ENCODE measurements at regions of chr22 and their contacts with region 1.

Region 1: DNA sequence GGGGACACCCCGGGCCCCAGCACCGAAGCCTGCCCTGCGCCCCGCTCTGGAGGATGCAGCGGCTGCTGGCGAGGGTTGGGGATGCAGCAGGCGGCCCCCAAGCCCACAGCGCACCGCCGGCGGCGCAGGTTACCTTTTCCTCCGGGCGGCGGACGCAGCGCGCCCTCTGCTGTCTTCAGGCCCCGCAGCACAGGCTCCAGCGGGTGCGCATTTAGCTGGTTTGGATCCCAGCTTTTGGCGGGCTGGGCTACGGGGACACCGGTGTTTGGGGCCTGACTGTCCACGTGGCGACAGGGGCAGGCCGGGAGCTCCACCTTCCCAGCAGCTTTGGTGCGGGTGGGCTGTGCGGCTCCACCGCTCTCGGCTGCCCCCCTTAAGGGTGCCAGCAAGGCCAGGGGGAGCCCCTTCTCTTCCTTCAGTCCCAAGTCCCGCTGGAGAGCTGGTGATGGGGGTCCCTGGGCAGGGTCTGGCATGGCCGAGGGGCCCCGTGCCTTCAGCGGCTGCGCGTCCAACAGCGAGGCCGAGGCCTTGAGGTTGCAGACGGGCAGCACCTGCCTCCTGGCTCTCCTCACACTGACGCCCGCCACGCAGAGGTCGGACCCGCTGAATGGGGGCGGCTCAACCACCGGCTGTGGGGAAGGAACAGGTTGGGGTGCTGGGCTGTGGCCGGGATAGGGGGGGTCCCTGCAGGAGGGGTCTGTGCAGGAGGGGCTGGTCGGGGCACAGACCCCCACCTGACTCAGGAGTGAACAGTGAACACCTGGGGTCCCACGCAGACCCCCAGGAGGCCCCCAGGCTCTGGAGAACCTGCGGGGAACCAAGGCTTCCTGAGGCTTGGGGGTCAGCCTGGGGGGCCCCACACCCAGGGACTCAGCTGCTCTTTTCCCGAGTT is 18.0 kb upstream of the IL17REL start:
- DNase-seq: peak; percentile 87
- ATAC-seq: peak; percentile 96
- H3K4me3 ChIP-seq: peak overlapping the region in 3 of 5 experiments; percentile 20 to 35 (median 23)
- H3K4me3 Mint-ChIP-seq: no peak overlapping the region
- H3K27ac ChIP-seq: no peak overlapping the region
- H3K27ac Mint-ChIP-seq: no peak overlapping the region
- H3K4me1 ChIP-seq: peaks cover 22 to 24% of the 10 kb centered on the region in 2 donors
- H3K4me1 Mint-ChIP-seq: peaks cover 16% of the 10 kb centered on the region
- H3K27me3 ChIP-seq: peaks cover 0 to 13% (median 6%) of the 10 kb centered on the region in 4 experiments
- H3K27me3 Mint-ChIP-seq: peaks cover 7% of the 10 kb centered on the region
- CTCF ChIP-seq: peak; percentile 92

Region 2: GRCh38 chr22:49925525-49926128 is 104.9 kb before region 1 on chr22:
- CTCF ChIA-PET with region 1: interaction called, 127 read pairs
- POLR2A ChIA-PET with region 1: interaction called, 20 read pairs
- intact Hi-C with region 1: no loop called
- DNase-seq: peak; percentile 96
- ATAC-seq: peak; percentile 74
- H3K4me3 ChIP-seq: peak overlapping the region in 4 of 5 experiments; percentile 37 to 53 (median 44)
- H3K4me3 Mint-ChIP-seq: peak overlapping the region; percentile 87
- H3K27ac ChIP-seq: peak overlapping the region; percentile 95 to 98
- H3K27ac Mint-ChIP-seq: peak overlapping the region; percentile 98
- H3K4me1 ChIP-seq: peaks cover 48 to 57% of the 10 kb centered on the region in 2 donors
- H3K4me1 Mint-ChIP-seq: peaks cover 55% of the 10 kb centered on the region
- H3K27me3 ChIP-seq: no peaks in the 10 kb centered on the region
- H3K27me3 Mint-ChIP-seq: no peaks in the 10 kb centered on the region
- CTCF ChIP-seq: no peak

Region 3: DNA sequence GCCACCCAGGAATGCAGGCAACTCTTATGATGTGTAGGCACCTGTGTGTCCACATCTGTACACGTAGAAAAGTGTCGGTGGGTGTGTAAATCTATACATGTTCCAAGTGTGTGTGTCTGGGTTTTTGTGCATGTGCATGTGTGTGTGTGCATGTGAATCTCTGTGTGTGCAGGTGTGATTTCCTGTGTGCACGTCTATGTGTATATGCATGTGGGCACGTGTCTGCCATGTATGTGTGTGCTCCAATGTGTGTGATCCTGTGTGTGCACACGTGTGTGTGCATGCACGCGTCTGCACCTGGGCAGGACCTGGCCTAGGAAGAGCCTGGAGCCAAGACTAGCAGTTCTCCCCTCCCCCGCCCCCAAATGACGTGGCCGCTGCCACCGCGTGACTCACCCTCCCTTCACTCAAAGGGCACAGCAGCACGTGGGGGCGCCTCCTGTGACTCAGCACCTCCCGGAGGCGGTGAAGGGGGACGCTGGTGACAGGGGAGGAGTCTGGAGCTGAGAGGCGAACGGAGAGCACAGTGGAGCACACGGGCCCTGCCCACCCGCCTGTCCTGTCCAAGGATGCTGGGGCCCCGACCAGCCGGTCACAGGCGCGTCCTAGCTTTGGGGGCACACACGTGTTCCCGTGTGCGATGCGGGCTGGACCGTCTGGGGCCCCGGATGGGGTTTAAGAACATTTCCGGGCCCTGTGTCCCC is 59.9 kb before region 1 on chr22:
- CTCF ChIA-PET with region 1: interaction called, 14 read pairs
- POLR2A ChIA-PET with region 1: no interaction called
- intact Hi-C with region 1: no loop called
- DNase-seq: peak; percentile 95
- ATAC-seq: peak; percentile 85
- H3K4me3 ChIP-seq: peak overlapping the region in 4 of 5 experiments; percentile 41 to 65 (median 55)
- H3K4me3 Mint-ChIP-seq: peak overlapping the region; percentile 84
- H3K27ac ChIP-seq: peak overlapping the region in 1 of 2 donors; percentile 40
- H3K27ac Mint-ChIP-seq: peak overlapping the region; percentile 96
- H3K4me1 ChIP-seq: peaks cover 43 to 56% of the 10 kb centered on the region in 2 donors
- H3K4me1 Mint-ChIP-seq: peaks cover 40% of the 10 kb centered on the region
- H3K27me3 ChIP-seq: no peaks in the 10 kb centered on the region
- H3K27me3 Mint-ChIP-seq: no peaks in the 10 kb centered on the region
- CTCF ChIP-seq: no peak

Region 4: GRCh38 chr22:49992921-49993648 is 37.5 kb before region 1 on chr22:
- CTCF ChIA-PET with region 1: interaction called, 43 read pairs
- POLR2A ChIA-PET with region 1: interaction called, 5 read pairs
- intact Hi-C with region 1: loop called (anchors 2 kb)
- DNase-seq: peak; percentile 82
- ATAC-seq: peak; percentile 96
- H3K4me3 ChIP-seq: no peak overlapping the region
- H3K4me3 Mint-ChIP-seq: peak overlapping the region; percentile 51
- H3K27ac ChIP-seq: no peak overlapping the region
- H3K27ac Mint-ChIP-seq: peak overlapping the region; percentile 82
- H3K4me1 ChIP-seq: peaks cover 11 to 24% of the 10 kb centered on the region in 2 donors
- H3K4me1 Mint-ChIP-seq: peaks cover 15% of the 10 kb centered on the region
- H3K27me3 ChIP-seq: no peaks in the 10 kb centered on the region
- H3K27me3 Mint-ChIP-seq: no peaks in the 10 kb centered on the region
- CTCF ChIP-seq: peak; percentile 87

Region 5: GRCh38 chr22:50044485-50045118 is 14.1 kb after region 1 on chr22:
- CTCF ChIA-PET with region 1: no interaction called
- POLR2A ChIA-PET with region 1: no interaction called
- intact Hi-C with region 1: no loop called
- DNase-seq: no peak
- ATAC-seq: no peak
- H3K4me3 ChIP-seq: no peak overlapping the region
- H3K4me3 Mint-ChIP-seq: no peak overlapping the region
- H3K27ac ChIP-seq: no peak overlapping the region
- H3K27ac Mint-ChIP-seq: no peak overlapping the region
- H3K4me1 ChIP-seq: no peaks in the 10 kb centered on the region
- H3K4me1 Mint-ChIP-seq: no peaks in the 10 kb centered on the region
- H3K27me3 ChIP-seq: peaks cover 0 to 13% (median 0%) of the 10 kb centered on the region in 4 experiments
- H3K27me3 Mint-ChIP-seq: peaks cover 11% of the 10 kb centered on the region
- CTCF ChIP-seq: no peak

Measured in B cell (primary cell).